Breast epithelium (tissue), 4 donors: ENCODE measurements at regions of chr12 and their contacts with region 1.

Region 1: GRCh38 chr12:51788876-51789275 is 59.6 kb downstream of the FIGNL2 start:
- DNase-seq: no peak
- H3K4me3 ChIP-seq: no peak overlapping the region
- H3K27ac ChIP-seq: no peak overlapping the region
- H3K4me1 ChIP-seq: no peaks in the 10 kb centered on the region
- H3K27me3 ChIP-seq: no peaks in the 10 kb centered on the region
- CTCF ChIP-seq: no peak
- POLR2A ChIP-seq: no peak

Region 2: GRCh38 chr12:51846911-51847642 is 58.2 kb after region 1 on chr12:
- intact Hi-C with region 1: loop called (anchors 2 kb)
- DNase-seq: peak in 1 of 2 donors; percentile 54
- H3K4me3 ChIP-seq: peak overlapping the region; percentile 54 to 87 (median 74)
- H3K27ac ChIP-seq: peak overlapping the region; percentile 82 to 97
- H3K4me1 ChIP-seq: no peaks in the 10 kb centered on the region
- H3K27me3 ChIP-seq: peaks cover 0 to 4% of the 10 kb centered on the region in 2 donors
- CTCF ChIP-seq: no peak
- POLR2A ChIP-seq: no peak